ENCODE measurements at regions of chr10 and their contacts with region 1.

Region 1: DNA sequence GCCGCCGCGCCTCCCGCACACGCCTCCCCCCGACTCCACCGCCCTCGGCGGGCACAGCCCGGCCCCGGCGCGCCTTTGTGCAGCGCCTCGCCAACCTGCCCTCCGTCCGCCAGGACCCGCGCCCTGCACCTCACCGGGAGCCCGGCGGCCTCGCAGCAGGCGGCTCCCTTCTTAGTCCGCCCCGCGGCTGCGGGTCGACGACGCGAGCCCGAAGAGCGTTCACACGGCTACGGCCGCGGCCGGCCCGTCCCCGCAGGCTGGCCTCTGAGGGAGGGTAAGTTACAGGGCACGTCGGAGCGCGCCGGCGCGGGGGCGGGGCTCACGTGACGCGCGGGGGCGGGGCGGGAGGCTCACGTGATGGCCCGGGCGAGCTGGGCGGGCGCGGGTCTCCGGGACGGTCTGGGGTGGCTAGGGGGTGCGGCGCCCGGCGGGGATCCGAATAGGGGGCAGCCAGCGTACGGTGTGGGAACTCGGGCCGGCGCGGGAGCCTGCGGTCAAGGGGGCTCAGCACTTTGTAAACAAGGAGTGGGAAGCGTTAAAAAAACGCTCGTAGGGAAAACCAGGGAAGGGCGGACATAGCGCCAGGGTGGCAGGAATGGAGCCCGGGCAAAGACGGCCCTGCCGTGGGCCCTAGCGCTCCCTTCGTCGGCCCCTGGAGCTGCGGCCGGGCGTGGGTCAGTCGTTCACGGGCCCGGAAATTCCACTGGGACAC is at the start of gene ARHGAP12:
- DNase-seq: peak; percentile 97
- ATAC-seq: peak; percentile 74
- H3K4me3 Mint-ChIP-seq: peak within 1 kb of the TSS; percentile 91
- H3K27ac Mint-ChIP-seq: peak within 1 kb of the TSS; percentile 88
- H3K4me1 Mint-ChIP-seq: peaks cover 44% of the 10 kb centered on the region
- H3K27me3 Mint-ChIP-seq: no peaks in the 10 kb centered on the region
- CTCF ChIP-seq: no peak
- total RNA-seq, gene ARHGAP12: 23.2 and 27.3 TPM in 2 replicates

Region 2: GRCh38 chr10:30701451-30702173 is 1227.1 kb before region 1 on chr10:
- CTCF ChIA-PET with region 1: no interaction called
- POLR2A ChIA-PET with region 1: interaction called, 3 read pairs
- intact Hi-C with region 1: loop called (anchors 1 kb)
- DNase-seq: no peak
- ATAC-seq: peak; percentile 61
- H3K4me3 Mint-ChIP-seq: peak overlapping the region; percentile 74
- H3K27ac Mint-ChIP-seq: peak overlapping the region; percentile 86
- H3K4me1 Mint-ChIP-seq: peaks cover 64% of the 10 kb centered on the region
- H3K27me3 Mint-ChIP-seq: no peaks in the 10 kb centered on the region
- CTCF ChIP-seq: no peak

Region 3: DNA sequence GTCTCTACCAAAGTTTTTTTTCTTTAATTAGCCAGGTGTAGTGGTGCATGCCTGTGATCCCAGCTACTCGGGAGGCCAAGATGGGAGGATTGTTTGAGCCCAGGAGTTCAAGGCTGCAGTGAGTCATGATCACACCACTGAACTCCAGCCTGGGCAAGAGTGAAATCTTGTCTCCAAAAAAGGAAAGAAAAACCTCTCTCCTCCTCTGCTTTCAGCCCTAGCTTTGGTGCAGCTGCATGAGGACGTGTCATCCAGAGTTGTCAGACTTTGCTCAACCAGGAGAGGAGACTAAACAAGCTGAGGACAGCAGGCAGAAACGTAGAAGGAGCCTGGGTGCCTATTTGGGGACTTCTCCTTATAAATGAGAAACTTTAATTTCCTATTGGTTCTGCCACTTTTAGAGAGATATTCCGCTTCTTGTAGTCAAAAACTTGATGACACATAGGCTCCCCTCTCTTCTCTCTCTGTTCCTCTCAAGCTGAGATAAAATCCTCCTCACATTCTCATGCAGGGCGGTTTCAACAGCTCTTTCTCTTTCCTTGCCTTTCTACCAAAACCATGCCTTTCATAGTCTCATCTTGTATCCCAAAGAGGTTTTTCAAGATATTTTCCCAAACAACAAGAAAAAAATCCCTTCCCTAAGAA is 205.5 kb before region 1 on chr10:
- CTCF ChIA-PET with region 1: no interaction called
- POLR2A ChIA-PET with region 1: no interaction called
- intact Hi-C with region 1: no loop called
- DNase-seq: no peak
- ATAC-seq: no peak
- H3K4me3 Mint-ChIP-seq: no peak overlapping the region
- H3K27ac Mint-ChIP-seq: no peak overlapping the region
- H3K4me1 Mint-ChIP-seq: no peaks in the 10 kb centered on the region
- H3K27me3 Mint-ChIP-seq: peaks cover 1% of the 10 kb centered on the region
- CTCF ChIP-seq: no peak

Region 4: GRCh38 chr10:31940839-31941653 is 12.3 kb after region 1 on chr10:
- CTCF ChIA-PET with region 1: no interaction called
- POLR2A ChIA-PET with region 1: interaction called, 3 read pairs
- intact Hi-C with region 1: loop called (anchors 1 kb)
- DNase-seq: no peak
- ATAC-seq: no peak
- H3K4me3 Mint-ChIP-seq: no peak overlapping the region
- H3K27ac Mint-ChIP-seq: no peak overlapping the region
- H3K4me1 Mint-ChIP-seq: peaks cover 8% of the 10 kb centered on the region
- H3K27me3 Mint-ChIP-seq: no peaks in the 10 kb centered on the region
- CTCF ChIP-seq: no peak

Region 5: DNA sequence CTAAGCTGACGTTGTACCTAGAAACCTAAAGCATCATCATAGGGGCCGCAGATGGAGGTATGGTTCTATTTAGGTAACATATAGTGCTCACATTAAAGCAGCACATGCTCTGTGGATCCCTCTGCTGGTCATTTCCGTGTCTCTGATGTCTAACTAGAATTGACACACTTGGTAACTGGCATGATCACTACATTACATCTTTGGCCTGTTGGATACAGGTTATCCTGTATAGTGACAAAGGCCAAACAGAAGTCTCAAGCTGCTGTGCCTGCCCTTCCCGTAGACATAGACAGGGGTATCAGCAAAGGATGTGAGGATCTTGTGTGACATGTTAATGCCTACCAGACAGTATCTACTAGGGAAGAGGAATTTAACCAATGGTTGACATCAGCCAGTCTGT is 76.3 kb after region 1 on chr10:
- CTCF ChIA-PET with region 1: interaction called, 6 read pairs
- POLR2A ChIA-PET with region 1: interaction called, 6 read pairs
- intact Hi-C with region 1: loop called (anchors 1 kb)
- DNase-seq: no peak
- ATAC-seq: peak; percentile 54
- H3K4me3 Mint-ChIP-seq: no peak overlapping the region
- H3K27ac Mint-ChIP-seq: no peak overlapping the region
- H3K4me1 Mint-ChIP-seq: peaks cover 2% of the 10 kb centered on the region
- H3K27me3 Mint-ChIP-seq: no peaks in the 10 kb centered on the region
- CTCF ChIP-seq: no peak

Region 6: GRCh38 chr10:32378363-32379317 is 449.9 kb after region 1 on chr10:
- CTCF ChIA-PET with region 1: no interaction called
- POLR2A ChIA-PET with region 1: interaction called, 7 read pairs
- intact Hi-C with region 1: loop called (anchors 2 kb)
- DNase-seq: peak; percentile 73
- ATAC-seq: peak; percentile 94
- H3K4me3 Mint-ChIP-seq: no peak overlapping the region
- H3K27ac Mint-ChIP-seq: no peak overlapping the region
- H3K4me1 Mint-ChIP-seq: peaks cover 21% of the 10 kb centered on the region
- H3K27me3 Mint-ChIP-seq: no peaks in the 10 kb centered on the region
- CTCF ChIP-seq: no peak

Measured in activated B cell treated with CpG ODN at 0.5 μM for 24 hours (primary cell).